Mammary epithelial cell (primary cell): ENCODE measurements at regions of chr12 and their contacts with region 1.

Region 1: DNA sequence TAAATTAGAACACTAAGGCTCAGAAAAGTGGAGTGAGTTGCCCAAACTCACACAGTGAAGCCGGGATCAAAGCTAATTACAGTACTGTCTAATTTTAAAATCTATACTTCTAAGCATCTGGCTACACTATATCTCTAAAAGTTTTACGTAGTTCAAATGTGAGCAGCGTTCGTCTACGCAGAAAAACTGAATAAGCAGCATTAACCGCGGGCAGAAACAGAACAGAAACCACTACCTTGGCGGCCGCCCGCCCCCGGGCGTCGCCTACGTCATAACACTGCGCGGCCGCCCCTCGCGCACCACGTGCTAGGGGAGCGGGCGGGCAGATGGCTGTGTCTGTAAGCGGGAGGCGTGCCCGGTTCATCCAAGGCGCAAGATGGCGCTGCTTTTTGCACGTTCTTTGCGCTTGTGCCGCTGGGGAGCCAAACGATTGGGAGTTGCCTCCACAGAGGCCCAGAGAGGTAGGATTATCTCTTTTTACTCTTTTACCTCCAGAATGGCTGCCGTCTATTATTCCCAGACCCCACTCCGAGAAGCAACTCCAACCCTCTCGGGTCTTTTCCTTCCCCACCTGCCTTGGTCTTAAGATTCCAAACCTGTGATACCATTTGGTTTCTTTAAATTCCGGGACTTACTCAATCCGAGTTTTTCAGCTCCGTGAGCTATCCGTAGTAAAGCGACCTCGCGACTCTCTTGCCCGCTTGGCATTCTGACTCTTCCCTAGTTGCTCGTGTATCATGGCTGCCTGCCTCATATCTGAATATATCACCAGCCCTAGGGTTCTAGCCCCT is at the start of gene SPRYD4:
- DNase-seq: peak; percentile 88
- H3K4me3 ChIP-seq: peak within 1 kb of the TSS; percentile 58 to 97 (median 89)
- H3K27ac ChIP-seq: peak within 1 kb of the TSS; percentile 88
- H3K4me1 ChIP-seq: peaks cover 8% of the 10 kb centered on the region
- H3K27me3 ChIP-seq: no peaks in the 10 kb centered on the region
- CTCF ChIP-seq: peak; percentile 6 to 31
- total RNA-seq, gene SPRYD4: 3.0 to 3.5 TPM

Region 2: GRCh38 chr12:56189176-56189917 is 279.1 kb before region 1 on chr12 and contains the start of gene SMARCC2:
- CTCF ChIA-PET with region 1: interaction called, 4 read pairs
- dilution Hi-C with region 1: no loop called
- in situ Hi-C with region 1: no loop called
- intact Hi-C with region 1: loop called (anchors 1 kb)
- DNase-seq: peak; percentile 75
- H3K4me3 ChIP-seq: peak within 1 kb of the TSS; percentile 69 to 88 (median 71)
- H3K27ac ChIP-seq: peak within 1 kb of the TSS; percentile 56
- H3K4me1 ChIP-seq: peaks cover 18% of the 10 kb centered on the region
- H3K27me3 ChIP-seq: no peaks in the 10 kb centered on the region
- CTCF ChIP-seq: peak; percentile 52 to 71
- total RNA-seq, gene SMARCC2: 28.7 to 61.6 TPM

Region 3: GRCh38 chr12:56315622-56316473 is 152.6 kb before region 1 on chr12 and contains the start of gene CNPY2:
- CTCF ChIA-PET with region 1: interaction called, 7 read pairs
- dilution Hi-C with region 1: no loop called
- in situ Hi-C with region 1: loop called in 1 of 2 experiments (anchors 10 kb)
- intact Hi-C with region 1: loop called (anchors 1 kb)
- DNase-seq: peak; percentile 99
- H3K4me3 ChIP-seq: peak within 1 kb of the TSS; percentile 94 to 96 (median 95)
- H3K27ac ChIP-seq: peak within 1 kb of the TSS; percentile 89
- H3K4me1 ChIP-seq: peaks cover 17% of the 10 kb centered on the region
- H3K27me3 ChIP-seq: no peaks in the 10 kb centered on the region
- CTCF ChIP-seq: peak in 1 of 2 donors; percentile 18
- total RNA-seq, gene CNPY2: 49.3 to 114 TPM

Region 4: GRCh38 chr12:56359851-56360767 is 108.3 kb before region 1 on chr12 and contains the start of gene STAT2:
- CTCF ChIA-PET with region 1: no interaction called
- dilution Hi-C with region 1: no loop called
- in situ Hi-C with region 1: loop called in 1 of 2 experiments (anchors 10 kb)
- intact Hi-C with region 1: loop called (anchors 1 kb)
- DNase-seq: peak; percentile 100
- H3K4me3 ChIP-seq: peak within 1 kb of the TSS; percentile 71 to 85 (median 83)
- H3K27ac ChIP-seq: peak within 1 kb of the TSS; percentile 95
- H3K4me1 ChIP-seq: peaks cover 12% of the 10 kb centered on the region
- H3K27me3 ChIP-seq: no peaks in the 10 kb centered on the region
- CTCF ChIP-seq: no peak
- total RNA-seq, gene STAT2: 93.1 to 231 TPM

Region 5: DNA sequence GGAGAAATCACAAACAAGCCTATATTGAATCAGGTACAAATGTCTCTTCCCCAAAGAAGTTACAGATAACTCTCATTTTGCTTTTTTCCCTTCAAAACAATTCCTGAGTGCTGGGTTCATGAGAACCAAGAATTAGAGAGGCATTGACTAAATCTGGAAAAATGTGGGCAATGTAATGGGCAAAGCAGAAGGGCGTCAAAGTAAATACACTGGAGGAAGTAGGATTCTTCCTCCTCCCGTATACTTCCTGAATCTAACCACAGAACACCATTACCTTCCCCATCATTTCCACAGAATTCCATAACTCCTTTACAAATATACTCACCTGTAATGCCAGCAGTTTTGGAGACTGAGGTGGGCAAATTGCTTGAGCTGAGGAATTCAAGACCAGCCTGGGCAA is 50.2 kb after region 1 on chr12:
- CTCF ChIA-PET with region 1: no interaction called
- dilution Hi-C with region 1: no loop called
- in situ Hi-C with region 1: no loop called
- intact Hi-C with region 1: no loop called
- DNase-seq: peak; percentile 51
- H3K4me3 ChIP-seq: no peak overlapping the region
- H3K27ac ChIP-seq: peak overlapping the region; percentile 59
- H3K4me1 ChIP-seq: peaks cover 34% of the 10 kb centered on the region
- H3K27me3 ChIP-seq: no peaks in the 10 kb centered on the region
- CTCF ChIP-seq: no peak